CD4-positive, alpha-beta memory T cell (primary cell): ENCODE measurements at regions of chr2 and their contacts with region 1.

Region 1: DNA sequence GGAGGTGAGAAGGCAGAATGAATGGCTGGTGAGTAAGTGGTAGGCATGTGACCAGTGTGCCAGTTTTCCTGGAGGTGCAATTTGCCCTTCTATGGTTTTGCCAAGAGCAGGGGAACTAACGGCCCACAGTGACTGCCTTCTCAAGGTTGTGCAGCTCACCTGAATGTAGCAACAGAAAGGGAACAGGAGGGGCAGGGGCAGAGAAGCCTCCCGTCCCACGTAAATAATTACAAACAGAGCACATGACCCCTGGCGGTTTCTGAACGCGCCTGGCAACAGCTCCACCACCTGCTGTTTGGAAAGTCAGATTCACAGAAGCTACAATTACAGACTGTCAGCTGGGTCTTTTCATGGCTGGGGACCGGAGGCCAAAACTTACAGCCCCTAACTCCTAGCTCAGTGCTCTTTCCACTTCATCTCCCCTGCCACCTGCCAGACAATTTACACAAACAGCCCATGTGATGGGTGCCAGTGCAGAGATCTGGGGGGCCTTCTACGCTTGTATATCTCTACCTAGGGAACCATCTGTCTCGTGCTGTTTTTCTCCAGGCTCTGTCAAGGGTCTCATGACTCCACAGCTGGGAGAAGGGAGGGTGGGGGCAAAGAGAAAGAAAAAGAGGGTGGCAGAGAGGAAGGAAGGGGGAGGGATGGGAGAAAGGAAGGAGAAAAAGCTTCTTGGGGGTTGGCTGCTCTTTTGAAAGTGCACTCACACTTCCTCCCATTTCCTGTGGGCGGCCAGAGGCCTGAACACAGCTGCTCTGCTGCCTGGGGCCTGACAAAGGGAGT is 69.6 kb downstream of the POLR1A start:
- DNase-seq: peak; percentile 79 to 88 (median 84)
- H3K4me3 ChIP-seq: peak overlapping the region; percentile 28 to 37
- H3K4me3 Mint-ChIP-seq: peak overlapping the region; percentile 74 to 87 (median 84)
- H3K27ac ChIP-seq: peak overlapping the region; percentile 82
- H3K27ac Mint-ChIP-seq: peak overlapping the region; percentile 96 to 100 (median 100)
- H3K4me1 ChIP-seq: peaks cover 81% of the 10 kb centered on the region
- H3K4me1 Mint-ChIP-seq: peaks cover 56 to 82% (median 68%) of the 10 kb centered on the region in 4 donors
- H3K27me3 ChIP-seq: no peaks in the 10 kb centered on the region
- H3K27me3 Mint-ChIP-seq: peaks cover 0 to 2% of the 10 kb centered on the region in 2 donors

Region 2: DNA sequence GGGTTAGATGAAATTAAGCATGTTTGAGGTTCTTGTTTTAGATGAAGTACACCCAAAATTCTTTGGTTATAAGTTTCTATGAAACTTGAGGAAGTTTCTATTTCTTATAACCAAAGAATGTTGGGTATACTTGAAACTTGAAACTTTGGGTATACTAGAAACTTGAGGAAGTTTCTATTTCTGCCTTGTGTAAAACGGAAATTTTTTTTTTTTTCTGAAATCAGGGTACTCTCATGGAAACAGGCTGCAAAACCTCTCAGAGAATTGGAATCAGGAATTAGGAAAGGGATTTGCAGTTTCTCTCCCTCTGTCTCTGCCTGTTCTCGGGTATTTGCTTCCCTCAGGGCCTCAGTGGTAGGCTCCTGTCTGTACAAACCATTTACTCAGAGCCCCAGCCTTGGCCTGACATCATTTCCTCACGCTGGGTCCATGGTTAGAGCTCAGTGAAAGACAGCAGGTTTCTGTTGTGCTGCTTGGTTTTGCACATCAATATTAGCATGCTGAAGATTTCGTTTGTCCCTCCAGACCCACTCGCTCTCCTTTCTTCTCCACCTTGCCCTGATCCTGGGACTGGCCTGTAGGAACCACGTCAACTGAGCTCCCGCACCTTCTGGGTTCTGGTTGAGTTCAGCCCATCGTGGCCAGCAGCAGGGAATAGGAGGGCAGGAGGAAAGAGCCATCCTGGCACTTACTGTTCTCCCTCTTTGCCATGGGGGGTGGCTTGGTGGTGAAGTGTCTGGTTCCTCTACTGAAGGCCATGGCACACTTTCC is 36.8 kb before region 1 on chr2:
- CTCF ChIA-PET with region 1: interaction called, 9 read pairs
- POLR2A ChIA-PET with region 1: interaction called, 15 read pairs
- intact Hi-C with region 1: loop called (anchors 5 kb)
- DNase-seq: peak; percentile 29 to 46 (median 38)
- H3K4me3 ChIP-seq: peak overlapping the region in 1 of 2 donors; percentile 8
- H3K4me3 Mint-ChIP-seq: peak overlapping the region in 7 of 8 donors; percentile 54 to 71 (median 63)
- H3K27ac ChIP-seq: peak overlapping the region; percentile 34
- H3K27ac Mint-ChIP-seq: peak overlapping the region; percentile 42 to 95 (median 88)
- H3K4me1 ChIP-seq: peaks cover 65% of the 10 kb centered on the region
- H3K4me1 Mint-ChIP-seq: peaks cover 20 to 61% (median 37%) of the 10 kb centered on the region in 4 donors
- H3K27me3 ChIP-seq: no peaks in the 10 kb centered on the region
- H3K27me3 Mint-ChIP-seq: no peaks in the 10 kb centered on the region

Region 3: GRCh38 chr2:86025229-86025820 is 10.8 kb before region 1 on chr2:
- CTCF ChIA-PET with region 1: interaction called, 10 read pairs
- POLR2A ChIA-PET with region 1: interaction called, 5 read pairs
- intact Hi-C with region 1: no loop called
- DNase-seq: no peak
- H3K4me3 ChIP-seq: no peak overlapping the region
- H3K4me3 Mint-ChIP-seq: no peak overlapping the region
- H3K27ac ChIP-seq: no peak overlapping the region
- H3K27ac Mint-ChIP-seq: peak overlapping the region in 3 of 7 donors; percentile 16 to 48 (median 23)
- H3K4me1 ChIP-seq: no peaks in the 10 kb centered on the region
- H3K4me1 Mint-ChIP-seq: peaks cover 0 to 6% (median under 1%) of the 10 kb centered on the region in 4 donors
- H3K27me3 ChIP-seq: no peaks in the 10 kb centered on the region
- H3K27me3 Mint-ChIP-seq: no peaks in the 10 kb centered on the region

Region 4: GRCh38 chr2:86105252-86105968 is 69.3 kb after region 1 on chr2 and contains the start of gene POLR1A:
- CTCF ChIA-PET with region 1: no interaction called
- POLR2A ChIA-PET with region 1: interaction called, 14 read pairs
- intact Hi-C with region 1: loop called (anchors 1 kb)
- DNase-seq: peak; percentile 88 to 91 (median 90)
- H3K4me3 ChIP-seq: peak within 1 kb of the TSS; percentile 73 to 83
- H3K4me3 Mint-ChIP-seq: peak within 1 kb of the TSS; percentile 88 to 96 (median 92)
- H3K27ac ChIP-seq: peak within 1 kb of the TSS; percentile 82
- H3K27ac Mint-ChIP-seq: peak within 1 kb of the TSS; percentile 93 to 100 (median 99)
- H3K4me1 ChIP-seq: peaks cover 34% of the 10 kb centered on the region
- H3K4me1 Mint-ChIP-seq: peaks cover 47 to 79% (median 61%) of the 10 kb centered on the region in 4 donors
- H3K27me3 ChIP-seq: no peaks in the 10 kb centered on the region
- H3K27me3 Mint-ChIP-seq: no peaks in the 10 kb centered on the region
- total RNA-seq, gene POLR1A: 23.4 to 25.8 TPM